Heart right ventricle (tissue), 16 donors: ENCODE measurements at regions of chr1 and their contacts with region 1.

Region 1: DNA sequence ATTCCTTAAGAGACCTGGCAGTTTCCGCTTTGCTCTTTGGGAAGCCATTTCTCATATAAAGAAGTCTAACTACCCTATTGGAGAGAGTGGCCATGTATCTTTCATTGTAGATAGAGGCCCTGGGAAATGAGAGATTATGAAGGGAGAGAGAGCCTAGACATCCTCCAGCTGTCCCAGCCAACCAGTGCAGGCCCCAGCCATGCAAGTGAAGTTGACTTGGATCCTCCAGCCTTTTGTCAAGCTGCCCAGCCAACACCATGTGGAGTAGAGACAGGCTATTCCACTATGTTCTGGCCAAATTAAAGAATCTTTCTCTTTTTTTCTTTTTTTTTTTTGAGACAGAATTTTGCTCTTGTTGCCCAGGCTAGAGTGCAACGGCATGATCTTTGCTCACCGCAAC is 7.1 kb upstream of the ANP32E start:
- DNase-seq: no peak
- ATAC-seq: peak in 2 of 8 donors; percentile 58 to 65
- H3K4me3 ChIP-seq: no peak overlapping the region
- H3K27ac ChIP-seq: no peak overlapping the region
- H3K4me1 ChIP-seq: no peaks in the 10 kb centered on the region
- H3K27me3 ChIP-seq: peaks cover 0 to 4% (median 0%) of the 10 kb centered on the region in 7 donors
- CTCF ChIP-seq: no peak

Region 2: GRCh38 chr1:150262388-150263320 is 19.7 kb after region 1 on chr1:
- intact Hi-C with region 1: no loop called
- DNase-seq: no peak
- ATAC-seq: no peak
- H3K4me3 ChIP-seq: no peak overlapping the region
- H3K27ac ChIP-seq: no peak overlapping the region
- H3K4me1 ChIP-seq: peaks cover 8 to 38% (median 12%) of the 10 kb centered on the region in 9 donors
- H3K27me3 ChIP-seq: peaks cover 0 to 17% (median 0%) of the 10 kb centered on the region in 7 donors
- CTCF ChIP-seq: no peak

Region 3: GRCh38 chr1:150895601-150896000 is 652.6 kb after region 1 on chr1:
- intact Hi-C with region 1: loop called in 1 of 10 experiments (anchors 10 kb)
- DNase-seq: no peak
- ATAC-seq: peak in 3 of 8 donors; percentile 39 to 73 (median 52)
- H3K4me3 ChIP-seq: no peak overlapping the region
- H3K27ac ChIP-seq: no peak overlapping the region
- H3K4me1 ChIP-seq: no peaks in the 10 kb centered on the region
- H3K27me3 ChIP-seq: no peaks in the 10 kb centered on the region
- CTCF ChIP-seq: no peak